Left colon (tissue), 2 donors: ENCODE measurements at regions of chr13 and their contacts with region 1.

Region 1: GRCh38 chr13:32639502-32640105 is 53.4 kb downstream of the PDS5B start:
- DNase-seq: peak; percentile 36 to 57
- ATAC-seq: peak; percentile 90

Region 2: DNA sequence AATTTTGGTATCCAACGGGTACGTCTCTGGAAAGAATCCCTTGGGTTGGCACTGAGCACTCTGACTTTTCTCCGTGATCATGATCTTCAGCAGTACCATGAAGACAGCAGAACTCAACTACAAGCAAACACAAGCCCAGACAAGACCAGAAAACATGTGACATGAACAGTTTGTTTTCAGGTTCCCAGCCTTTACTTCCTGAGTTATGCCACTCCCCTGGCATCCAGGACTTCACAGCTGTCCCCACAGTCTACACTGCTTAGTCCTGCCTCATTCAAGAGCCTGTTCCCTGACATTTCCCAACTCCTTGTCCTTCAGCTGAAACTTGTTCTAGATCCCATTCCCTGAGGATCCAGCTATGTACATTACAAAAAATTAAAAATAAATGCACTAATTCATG is 206.7 kb before region 1 on chr13:
- intact Hi-C with region 1: no loop called
- DNase-seq: no peak
- ATAC-seq: no peak

Region 3: DNA sequence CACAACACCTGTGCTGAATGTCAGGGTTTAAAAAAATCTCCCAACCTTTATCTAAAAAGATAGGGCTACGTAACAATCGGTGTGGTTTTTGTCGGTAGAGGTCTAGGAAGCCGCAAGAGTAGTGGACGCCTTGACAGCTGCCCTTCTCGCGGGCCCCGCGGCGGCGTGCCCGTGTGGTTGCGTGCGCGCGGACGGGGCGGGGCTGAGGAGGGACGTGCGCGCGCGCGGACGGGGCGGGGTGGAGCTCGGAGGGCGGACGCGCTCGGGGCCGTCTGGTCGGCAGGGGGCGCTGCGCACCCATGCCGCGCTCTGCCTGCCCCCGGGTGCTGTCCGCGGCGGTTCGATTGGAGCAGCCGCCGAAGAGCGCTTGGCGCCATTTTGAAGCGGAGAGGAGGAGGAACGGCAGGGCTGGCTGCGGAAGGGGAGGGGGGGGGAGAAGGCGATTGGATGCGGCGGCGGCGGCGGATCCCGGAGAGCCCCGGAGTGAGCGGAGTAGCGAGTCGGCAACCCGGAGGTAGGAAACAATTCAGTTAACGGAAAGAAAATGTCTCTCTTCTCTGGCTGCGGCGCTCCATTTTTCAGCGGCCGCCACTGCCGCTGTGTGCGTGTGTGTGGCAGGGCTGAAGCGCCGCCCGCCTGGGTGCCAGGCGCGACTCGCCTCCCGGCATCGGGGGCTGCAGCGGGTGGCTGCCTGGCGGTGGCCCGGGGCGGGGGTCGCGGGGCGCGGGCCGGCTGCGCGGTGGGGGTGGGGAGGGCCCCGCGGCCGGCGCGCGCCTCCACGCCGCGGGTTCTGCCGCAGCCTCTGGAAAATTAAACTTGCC is 53.3 kb before region 1 on chr13 and contains the start of gene PDS5B:
- intact Hi-C with region 1: loop called in 1 of 2 experiments (anchors 2 kb)
- DNase-seq: peak; percentile 94 to 95
- ATAC-seq: peak; percentile 94
- total RNA-seq, gene PDS5B: 29.2 to 29.7 TPM

Region 4: DNA sequence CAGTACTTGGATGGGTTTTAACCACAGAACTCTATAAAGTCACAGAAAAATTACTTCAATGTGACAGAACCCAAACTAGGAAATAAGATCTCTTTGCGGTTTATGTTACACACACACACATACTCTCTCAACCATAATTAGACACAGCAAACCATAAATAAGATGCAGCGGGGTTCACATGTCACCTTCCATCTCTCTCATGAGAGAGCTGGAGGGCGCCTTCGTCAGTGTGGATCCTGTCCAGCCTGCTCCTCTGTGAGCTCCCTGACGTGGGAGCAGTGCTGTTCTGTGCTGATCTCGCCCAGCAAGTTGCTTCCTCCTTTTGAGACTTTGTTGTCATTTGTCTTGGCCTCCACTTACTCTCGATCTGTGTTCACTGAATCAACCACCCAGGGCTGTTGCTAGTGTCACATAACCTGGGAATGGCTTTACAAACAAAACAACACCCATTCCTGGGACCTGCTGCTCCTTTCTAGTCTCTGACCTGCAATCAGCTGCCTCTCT is 171.7 kb after region 1 on chr13:
- intact Hi-C with region 1: no loop called
- DNase-seq: peak; percentile 30 to 43
- ATAC-seq: peak; percentile 97